Calu3 (cell line): ENCODE measurements at regions of chr6 and their contacts with region 1.

Region 1: GRCh38 chr6:22657352-22657980 is 88.1 kb downstream of the HDGFL1 start:
- DNase-seq: peak; percentile 28
- H3K4me3 Mint-ChIP-seq: no peak overlapping the region
- H3K27ac Mint-ChIP-seq: peak overlapping the region; percentile 25
- H3K4me1 Mint-ChIP-seq: peaks cover 50% of the 10 kb centered on the region
- H3K27me3 Mint-ChIP-seq: no peaks in the 10 kb centered on the region
- CTCF ChIP-seq: no peak

Region 2: DNA sequence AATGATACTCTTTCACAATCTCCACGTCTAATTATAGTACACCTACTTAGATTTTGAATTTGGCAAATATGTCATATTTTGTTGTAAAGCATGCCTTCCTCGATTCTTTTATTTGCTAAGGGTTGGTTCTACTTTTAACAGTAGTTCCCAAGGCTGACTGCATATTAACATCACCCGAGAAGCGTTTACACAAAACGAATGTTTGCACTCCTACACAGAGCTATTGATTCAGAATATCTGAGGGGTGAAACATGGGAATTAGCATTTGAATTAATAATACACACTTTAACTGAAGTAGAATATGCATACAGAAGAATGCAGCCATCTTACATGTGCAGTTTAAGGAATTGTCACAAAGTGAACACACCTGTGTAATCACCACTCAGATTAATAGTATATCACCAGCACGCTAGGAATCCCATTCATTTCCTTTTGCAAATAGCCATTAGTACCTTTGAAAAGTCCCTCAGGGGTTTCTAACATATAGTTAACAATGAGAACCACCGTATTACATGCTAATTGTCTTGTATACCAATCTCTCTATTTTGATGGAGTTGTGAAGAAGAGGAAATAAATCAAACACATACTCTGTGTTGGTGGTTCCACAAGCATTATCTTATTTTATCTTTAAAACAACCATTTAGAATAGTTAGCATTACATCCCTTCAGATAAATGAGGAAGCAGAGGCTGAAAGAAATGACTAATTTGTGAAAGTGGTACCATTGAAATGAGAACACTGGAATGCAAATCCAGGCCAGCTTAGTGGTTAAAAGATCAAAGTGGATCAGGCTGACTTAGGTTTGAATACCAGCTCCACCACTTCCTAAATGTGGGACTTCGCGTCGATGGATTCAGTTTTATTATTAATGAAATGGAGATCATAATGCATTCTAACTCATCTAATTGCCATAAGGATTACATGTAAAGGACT is 229.4 kb after region 1 on chr6:
- CTCF ChIA-PET with region 1: no interaction called
- intact Hi-C with region 1: loop called (anchors 5 kb)
- DNase-seq: peak; percentile 43
- H3K4me3 Mint-ChIP-seq: peak overlapping the region; percentile 17
- H3K27ac Mint-ChIP-seq: peak overlapping the region; percentile 71
- H3K4me1 Mint-ChIP-seq: peaks cover 50% of the 10 kb centered on the region
- H3K27me3 Mint-ChIP-seq: no peaks in the 10 kb centered on the region
- CTCF ChIP-seq: no peak